ENCODE measurements at regions of chr6 and their contacts with region 1.

Region 1: DNA sequence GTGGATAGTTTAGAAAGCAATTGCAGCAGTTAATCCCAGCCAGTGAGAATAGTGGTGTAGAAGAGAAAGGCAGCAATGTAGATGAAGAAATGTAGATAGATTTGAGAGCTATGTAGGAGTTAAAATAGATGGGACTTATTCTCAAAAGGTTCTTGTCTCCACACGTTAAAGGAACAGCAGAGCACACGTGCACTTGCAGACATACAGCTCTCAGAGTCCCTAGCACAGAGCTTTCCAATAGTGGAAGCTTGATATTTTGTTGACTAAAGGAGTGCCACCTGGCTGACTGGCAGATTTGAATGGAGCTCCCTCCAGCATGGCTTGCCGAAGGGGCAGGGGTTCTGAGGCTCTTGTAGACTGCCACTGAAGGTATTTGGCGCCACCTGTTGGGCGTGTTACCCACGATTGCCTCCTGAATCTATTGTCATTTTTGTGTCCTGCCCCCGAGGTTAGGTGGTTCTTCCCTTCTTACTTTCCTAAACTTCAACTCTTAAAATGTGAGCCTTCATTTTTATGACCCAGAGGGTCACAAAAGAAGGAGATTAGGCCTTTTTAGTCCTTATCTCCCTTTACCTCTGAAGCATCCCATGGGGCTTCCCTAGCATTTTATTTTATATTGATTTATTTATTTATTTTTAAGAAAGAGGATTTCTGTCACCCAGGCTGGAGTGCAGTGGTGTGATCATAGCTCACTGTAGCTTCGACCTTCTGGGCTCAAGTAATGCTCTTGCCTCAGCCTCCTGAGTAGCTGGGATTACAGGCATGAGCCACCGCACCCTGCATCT is 16.4 kb downstream of the BRD2 start:
- DNase-seq: peak; percentile 94
- H3K4me3 Mint-ChIP-seq: no peak overlapping the region
- H3K27ac Mint-ChIP-seq: peak overlapping the region; percentile 32
- H3K4me1 Mint-ChIP-seq: peaks cover 33% of the 10 kb centered on the region
- H3K27me3 Mint-ChIP-seq: no peaks in the 10 kb centered on the region

Region 2: DNA sequence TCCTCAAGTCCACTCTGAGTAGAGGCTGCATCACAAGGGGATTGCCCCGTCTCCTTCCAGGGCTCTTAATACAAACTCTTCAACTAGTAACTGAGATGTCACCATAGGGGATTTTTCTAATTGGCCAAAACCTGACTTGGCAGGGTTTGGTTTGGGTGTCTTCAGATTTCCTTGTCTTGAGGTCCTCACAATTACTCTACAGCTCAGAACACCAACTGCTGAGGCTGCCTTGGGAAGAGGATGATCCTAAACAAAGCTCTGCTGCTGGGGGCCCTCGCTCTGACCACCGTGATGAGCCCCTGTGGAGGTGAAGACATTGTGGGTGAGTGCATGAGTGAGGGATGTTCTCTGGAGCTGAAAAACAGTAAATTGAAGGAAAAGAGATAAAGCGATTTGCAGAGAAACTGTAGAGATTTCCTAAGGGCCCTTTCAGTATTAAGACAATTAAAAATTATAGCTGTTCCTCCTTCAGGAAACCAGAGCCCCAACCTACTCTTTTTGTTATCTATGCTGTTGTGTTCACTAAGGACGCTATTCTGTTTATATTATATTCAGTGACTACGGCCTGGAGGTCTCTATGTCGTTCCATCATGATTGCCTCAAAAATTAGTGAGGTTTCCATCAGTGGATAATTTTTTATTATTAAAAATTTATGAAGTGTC is 347.4 kb before region 1 on chr6 and contains the start of gene HLA-DQA1:
- CTCF ChIA-PET with region 1: no interaction called
- POLR2A ChIA-PET with region 1: no interaction called
- DNase-seq: no peak
- H3K4me3 Mint-ChIP-seq: no peak within 1 kb of the TSS
- H3K27ac Mint-ChIP-seq: no peak within 1 kb of the TSS
- H3K4me1 Mint-ChIP-seq: peaks cover 14% of the 10 kb centered on the region
- H3K27me3 Mint-ChIP-seq: peaks cover 19% of the 10 kb centered on the region
- total RNA-seq, gene HLA-DQA1: 4.7 to 5.2 TPM

Region 3: GRCh38 chr6:32843979-32844838 is 140.6 kb before region 1 on chr6 and contains the start of gene PSMB8:
- CTCF ChIA-PET with region 1: interaction called, 18 read pairs
- POLR2A ChIA-PET with region 1: no interaction called
- DNase-seq: peak; percentile 99
- H3K4me3 Mint-ChIP-seq: peak within 1 kb of the TSS; percentile 99
- H3K27ac Mint-ChIP-seq: peak within 1 kb of the TSS; percentile 100
- H3K4me1 Mint-ChIP-seq: peaks cover 75% of the 10 kb centered on the region
- H3K27me3 Mint-ChIP-seq: no peaks in the 10 kb centered on the region
- total RNA-seq, gene PSMB8: 307 to 379 TPM

Region 4: GRCh38 chr6:32885698-32886286 is 99.0 kb before region 1 on chr6:
- CTCF ChIA-PET with region 1: interaction called, 11 read pairs
- POLR2A ChIA-PET with region 1: no interaction called
- DNase-seq: no peak
- H3K4me3 Mint-ChIP-seq: no peak overlapping the region
- H3K27ac Mint-ChIP-seq: no peak overlapping the region
- H3K4me1 Mint-ChIP-seq: peaks cover 4% of the 10 kb centered on the region
- H3K27me3 Mint-ChIP-seq: peaks cover 14% of the 10 kb centered on the region

Region 5: GRCh38 chr6:32933636-32934085 is 51.1 kb before region 1 on chr6:
- CTCF ChIA-PET with region 1: interaction called, 46 read pairs
- POLR2A ChIA-PET with region 1: no interaction called
- DNase-seq: peak; percentile 81
- H3K4me3 Mint-ChIP-seq: no peak overlapping the region
- H3K27ac Mint-ChIP-seq: no peak overlapping the region
- H3K4me1 Mint-ChIP-seq: peaks cover 15% of the 10 kb centered on the region
- H3K27me3 Mint-ChIP-seq: peaks cover 18% of the 10 kb centered on the region

Region 6: GRCh38 chr6:32952817-32953739 is 31.7 kb before region 1 on chr6 and contains the start of gene HLA-DMA:
- CTCF ChIA-PET with region 1: interaction called, 31 read pairs
- POLR2A ChIA-PET with region 1: no interaction called
- DNase-seq: peak; percentile 85
- H3K4me3 Mint-ChIP-seq: peak within 1 kb of the TSS; percentile 72
- H3K27ac Mint-ChIP-seq: peak within 1 kb of the TSS; percentile 82
- H3K4me1 Mint-ChIP-seq: peaks cover 54% of the 10 kb centered on the region
- H3K27me3 Mint-ChIP-seq: no peaks in the 10 kb centered on the region
- total RNA-seq, gene HLA-DMA: 24.0 to 26.8 TPM